Activated T-helper 2 cell treated with anti-CD3 and anti-CD28 coated beads, Interferon-gamma antibody, Interleukin-2, Interleukin-4, amounts not matched to agents 10 μg/mL and 5 μg/mL and 100 μg/mL, durations not matched to agents 14 hours and 24 hours and 36 hours (primary cell): ENCODE measurements at regions of chr4 and their contacts with region 1.

Region 1: DNA sequence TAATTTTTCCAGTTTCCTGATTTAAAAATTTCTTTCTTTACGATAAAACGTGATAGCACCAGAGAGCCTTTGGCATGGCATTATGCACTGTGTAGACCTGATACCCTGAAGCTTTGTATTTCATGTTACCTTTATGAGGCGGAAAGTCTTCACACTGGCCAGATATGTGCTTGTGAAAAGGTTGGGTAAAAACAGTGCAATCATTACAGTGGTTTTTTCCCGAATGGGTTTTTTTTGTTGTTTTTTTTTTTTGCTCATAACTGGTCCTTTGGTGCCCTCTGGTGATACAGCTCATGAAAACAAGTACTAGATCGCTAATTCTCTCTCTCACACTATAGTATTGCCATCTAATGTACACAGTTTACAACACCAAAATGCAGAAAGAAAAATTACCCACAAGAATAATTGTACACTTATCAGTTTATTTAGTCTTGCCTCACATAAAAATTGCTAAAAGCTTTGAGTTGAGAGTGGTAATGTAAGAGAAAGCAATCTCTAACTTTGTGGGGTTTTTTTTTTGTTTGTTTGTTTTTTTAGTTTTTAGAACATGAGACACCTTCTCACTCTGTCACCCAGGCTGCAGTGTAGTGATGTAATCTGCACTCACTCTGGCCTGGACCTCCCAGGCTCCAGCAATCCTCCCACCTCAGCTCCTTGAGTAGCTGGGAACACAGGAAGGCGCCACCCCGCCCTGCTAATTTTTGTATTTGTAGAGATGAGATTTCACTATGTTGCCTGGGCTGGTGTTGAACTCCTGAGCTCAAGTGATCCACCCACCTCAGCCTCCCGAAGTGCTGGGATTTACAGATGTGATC is 21.3 kb downstream of the SPCS3 start:
- DNase-seq: no peak
- H3K4me3 Mint-ChIP-seq: no peak overlapping the region
- H3K27ac Mint-ChIP-seq: no peak overlapping the region
- H3K4me1 Mint-ChIP-seq: no peaks in the 10 kb centered on the region
- H3K27me3 Mint-ChIP-seq: no peaks in the 10 kb centered on the region

Region 2: GRCh38 chr4:175947117-175947722 is 393.9 kb before region 1 on chr4:
- intact Hi-C with region 1: loop called (anchors 1 kb)
- DNase-seq: no peak
- H3K4me3 Mint-ChIP-seq: no peak overlapping the region
- H3K27ac Mint-ChIP-seq: no peak overlapping the region
- H3K4me1 Mint-ChIP-seq: peaks cover 6% of the 10 kb centered on the region
- H3K27me3 Mint-ChIP-seq: peaks cover 4% of the 10 kb centered on the region

Region 3: GRCh38 chr4:176034499-176034898 is 306.6 kb before region 1 on chr4:
- intact Hi-C with region 1: loop called (anchors 1 kb)
- DNase-seq: no peak
- H3K4me3 Mint-ChIP-seq: no peak overlapping the region
- H3K27ac Mint-ChIP-seq: no peak overlapping the region
- H3K4me1 Mint-ChIP-seq: no peaks in the 10 kb centered on the region
- H3K27me3 Mint-ChIP-seq: no peaks in the 10 kb centered on the region

Region 4: DNA sequence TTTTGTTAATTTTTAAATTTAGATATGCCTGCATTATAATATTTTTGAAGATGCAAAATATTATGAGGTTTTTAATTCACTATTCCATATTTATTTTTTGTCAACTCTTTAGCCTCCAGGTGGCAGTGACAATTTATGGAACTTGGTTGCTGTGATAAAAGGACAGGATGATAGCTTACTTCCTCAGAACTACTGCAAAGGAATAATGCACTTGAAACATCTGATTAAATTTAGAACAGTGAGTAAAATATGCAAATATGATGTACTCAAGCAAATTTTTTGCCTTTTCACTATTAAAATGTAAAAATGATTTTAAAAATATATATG is 190.8 kb before region 1 on chr4:
- intact Hi-C with region 1: loop called (anchors 1 kb)
- DNase-seq: no peak
- H3K4me3 Mint-ChIP-seq: no peak overlapping the region
- H3K27ac Mint-ChIP-seq: no peak overlapping the region
- H3K4me1 Mint-ChIP-seq: no peaks in the 10 kb centered on the region
- H3K27me3 Mint-ChIP-seq: no peaks in the 10 kb centered on the region